ENCODE measurements at regions of chr16 and their contacts with region 1.

Region 1: GRCh38 chr16:84726079-84726668 is 26.4 kb downstream of the USP10 start:
- DNase-seq: peak; percentile 61
- ATAC-seq: peak; percentile 82
- H3K4me3 ChIP-seq: no peak overlapping the region
- H3K27ac ChIP-seq: peak overlapping the region; percentile 21
- H3K4me1 ChIP-seq: peaks cover 40 to 65% of the 10 kb centered on the region in 2 experiments
- H3K27me3 ChIP-seq: no peaks in the 10 kb centered on the region
- CTCF ChIP-seq: peak; percentile 93 to 100 (median 100)
- POLR2A ChIP-seq: no peak
- RAD21 ChIP-seq: peak; percentile 95

Region 2: GRCh38 chr16:84511180-84511824 is 214.9 kb before region 1 on chr16:
- CTCF ChIA-PET with region 1: interaction called, 11 read pairs
- POLR2A ChIA-PET with region 1: no interaction called
- RAD21 ChIA-PET with region 1: interaction called in 1 of 2 experiments, 5 read pairs
- intact Hi-C with region 1: loop called (anchors 1 kb)
- DNase-seq: peak; percentile 72
- ATAC-seq: peak; percentile 85
- H3K4me3 ChIP-seq: peak overlapping the region; percentile 12 to 13; a peak in 2 of 4 replicates
- H3K27ac ChIP-seq: no peak overlapping the region
- H3K4me1 ChIP-seq: peaks cover under 1 to 24% of the 10 kb centered on the region in 2 experiments
- H3K27me3 ChIP-seq: no peaks in the 10 kb centered on the region
- CTCF ChIP-seq: peak in 2 of 3 experiments; percentile 99 to 100; a peak in 4 of 6 replicates
- POLR2A ChIP-seq: no peak
- RAD21 ChIP-seq: no peak

Region 3: GRCh38 chr16:84663433-84664101 is 62.6 kb before region 1 on chr16:
- CTCF ChIA-PET with region 1: interaction called, 15 read pairs
- POLR2A ChIA-PET with region 1: no interaction called
- RAD21 ChIA-PET with region 1: no interaction called
- intact Hi-C with region 1: no loop called
- DNase-seq: no peak
- ATAC-seq: no peak
- H3K4me3 ChIP-seq: no peak overlapping the region
- H3K27ac ChIP-seq: no peak overlapping the region
- H3K4me1 ChIP-seq: no peaks in the 10 kb centered on the region
- H3K27me3 ChIP-seq: no peaks in the 10 kb centered on the region
- CTCF ChIP-seq: no peak
- POLR2A ChIP-seq: no peak
- RAD21 ChIP-seq: no peak

Region 4: DNA sequence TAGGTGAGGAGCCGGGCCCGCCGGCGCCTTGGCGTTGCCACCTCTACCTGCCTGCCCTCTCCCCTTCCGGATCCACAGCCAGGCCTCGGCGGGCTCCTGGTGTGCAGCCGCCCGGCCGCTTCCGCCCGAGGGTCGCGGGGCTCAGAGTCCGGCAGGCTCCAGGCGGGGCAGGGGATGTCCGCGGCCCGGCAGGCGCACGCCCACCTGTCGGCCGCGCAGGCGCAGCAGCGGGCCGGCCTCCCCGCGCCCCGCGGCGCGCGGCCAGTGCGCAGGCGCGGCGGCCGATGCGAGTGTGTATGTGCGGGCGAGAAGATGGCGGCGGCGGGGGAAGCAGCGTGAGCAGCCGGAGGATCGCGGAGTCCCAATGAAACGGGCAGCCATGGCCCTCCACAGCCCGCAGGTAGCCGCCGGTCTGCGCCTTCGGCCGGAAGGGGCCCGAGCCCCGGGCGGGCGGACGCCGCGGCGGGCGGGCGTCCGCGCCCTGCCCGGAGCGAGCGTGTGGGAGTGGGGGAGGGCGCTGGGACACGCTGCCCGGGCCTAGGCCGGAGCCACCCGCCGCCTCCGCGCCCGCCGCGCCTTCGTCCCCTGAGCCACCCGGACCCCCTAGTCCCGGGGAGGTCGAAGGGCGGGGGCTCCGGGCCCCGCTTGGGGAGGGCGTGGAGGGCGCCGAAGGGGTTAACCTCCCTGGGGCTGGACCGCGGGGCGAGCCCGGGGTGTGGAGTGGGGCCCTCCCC is 26.3 kb before region 1 on chr16 and contains the start of gene USP10:
- CTCF ChIA-PET with region 1: interaction called, 12 read pairs
- POLR2A ChIA-PET with region 1: no interaction called
- RAD21 ChIA-PET with region 1: no interaction called
- intact Hi-C with region 1: no loop called
- DNase-seq: peak; percentile 37
- ATAC-seq: peak; percentile 93
- H3K4me3 ChIP-seq: peak within 1 kb of the TSS; percentile 90 to 95
- H3K27ac ChIP-seq: peak within 1 kb of the TSS; percentile 90
- H3K4me1 ChIP-seq: peaks cover 5 to 32% of the 10 kb centered on the region in 2 experiments; a peak in 3 of 4 replicates
- H3K27me3 ChIP-seq: no peaks in the 10 kb centered on the region
- CTCF ChIP-seq: no peak
- POLR2A ChIP-seq: peak; percentile 82
- RAD21 ChIP-seq: no peak
- total RNA-seq, gene USP10: 175 TPM

Region 5: DNA sequence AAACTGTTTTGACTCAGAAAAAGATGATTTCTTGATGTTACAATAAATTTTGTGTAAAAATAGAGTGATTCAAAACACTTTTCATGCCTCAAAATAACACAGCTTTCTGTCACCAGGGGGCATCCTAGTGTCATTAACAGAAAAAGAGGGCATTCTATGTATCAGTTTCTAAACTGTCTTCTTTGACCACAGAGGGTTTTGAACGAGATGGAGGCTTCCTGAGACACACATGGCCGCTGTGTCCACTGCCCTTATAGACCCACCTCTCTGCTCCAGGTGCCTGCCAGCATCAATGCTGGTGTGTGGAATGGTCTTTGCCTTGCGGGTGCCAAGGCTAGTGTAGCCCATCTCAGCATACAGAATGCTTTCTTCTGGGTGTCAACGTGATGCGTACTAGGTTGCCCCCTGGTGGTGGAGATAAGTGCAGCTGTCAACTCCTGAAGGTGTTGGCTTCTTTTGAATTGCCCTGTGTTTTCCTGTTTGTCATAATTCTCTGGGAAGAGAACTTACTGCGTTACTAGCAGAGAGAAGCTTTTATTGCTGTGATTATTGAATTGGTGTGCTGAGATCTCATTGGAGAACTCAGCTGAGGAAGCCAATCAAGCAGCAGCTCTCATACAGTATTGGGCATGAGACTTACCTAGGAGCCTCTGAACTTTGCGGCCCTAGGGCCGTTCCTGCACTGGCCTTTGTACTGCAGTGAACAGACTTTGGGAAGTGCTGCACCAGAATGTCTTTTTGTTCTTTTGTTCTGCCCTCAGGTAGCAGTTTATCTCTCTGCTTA is 12.3 kb after region 1 on chr16:
- CTCF ChIA-PET with region 1: interaction called, 67 read pairs
- POLR2A ChIA-PET with region 1: interaction called, 6 read pairs
- RAD21 ChIA-PET with region 1: no interaction called
- intact Hi-C with region 1: no loop called
- DNase-seq: peak; percentile 85
- ATAC-seq: peak; percentile 93
- H3K4me3 ChIP-seq: no peak overlapping the region
- H3K27ac ChIP-seq: peak overlapping the region; percentile 9; the same call in 1 of the 2 replicates
- H3K4me1 ChIP-seq: peaks cover 21 to 39% of the 10 kb centered on the region in 2 experiments
- H3K27me3 ChIP-seq: no peaks in the 10 kb centered on the region
- CTCF ChIP-seq: peak; percentile 96 to 99 (median 98)
- POLR2A ChIP-seq: no peak
- RAD21 ChIP-seq: peak; percentile 78

Measured in HCT116 (cell line).